ENCODE measurements at regions of chr12 and their contacts with region 1.

Region 1: GRCh38 chr12:50167041-50167828 is at the start of gene CERS5:
- DNase-seq: peak; percentile 97 to 98
- ATAC-seq: peak; percentile 96
- H3K4me3 ChIP-seq: peak within 1 kb of the TSS; percentile 74 to 99 (median 92)
- H3K27ac ChIP-seq: peak within 1 kb of the TSS; percentile 80 to 91 (median 87)
- H3K4me1 ChIP-seq: peaks cover 5 to 9% of the 10 kb centered on the region in 2 donors
- H3K27me3 ChIP-seq: no peaks in the 10 kb centered on the region
- CTCF ChIP-seq: peak in 4 of 5 experiments; percentile 13 to 49 (median 46)
- POLR2A ChIP-seq: peak; percentile 62 to 67
- total RNA-seq, gene CERS5: 5.4 to 9.2 (median 7.3) TPM

Region 2: GRCh38 chr12:49623142-49623904 is 543.9 kb before region 1 on chr12 and contains the start of gene PRPF40B:
- in situ Hi-C with region 1: no loop called
- intact Hi-C with region 1: no loop called
- DNase-seq: peak; percentile 80 to 90
- ATAC-seq: peak; percentile 87 to 88
- H3K4me3 ChIP-seq: peak within 1 kb of the TSS; percentile 52 to 84 (median 65)
- H3K27ac ChIP-seq: peak within 1 kb of the TSS; percentile 80 to 91 (median 84)
- H3K4me1 ChIP-seq: peaks cover 11 to 15% of the 10 kb centered on the region in 2 donors
- H3K27me3 ChIP-seq: no peaks in the 10 kb centered on the region
- CTCF ChIP-seq: peak; percentile 36 to 65 (median 54)
- POLR2A ChIP-seq: peak; percentile 91 to 94
- total RNA-seq, gene PRPF40B: 17.6 to 21.3 (median 20.2) TPM

Region 3: DNA sequence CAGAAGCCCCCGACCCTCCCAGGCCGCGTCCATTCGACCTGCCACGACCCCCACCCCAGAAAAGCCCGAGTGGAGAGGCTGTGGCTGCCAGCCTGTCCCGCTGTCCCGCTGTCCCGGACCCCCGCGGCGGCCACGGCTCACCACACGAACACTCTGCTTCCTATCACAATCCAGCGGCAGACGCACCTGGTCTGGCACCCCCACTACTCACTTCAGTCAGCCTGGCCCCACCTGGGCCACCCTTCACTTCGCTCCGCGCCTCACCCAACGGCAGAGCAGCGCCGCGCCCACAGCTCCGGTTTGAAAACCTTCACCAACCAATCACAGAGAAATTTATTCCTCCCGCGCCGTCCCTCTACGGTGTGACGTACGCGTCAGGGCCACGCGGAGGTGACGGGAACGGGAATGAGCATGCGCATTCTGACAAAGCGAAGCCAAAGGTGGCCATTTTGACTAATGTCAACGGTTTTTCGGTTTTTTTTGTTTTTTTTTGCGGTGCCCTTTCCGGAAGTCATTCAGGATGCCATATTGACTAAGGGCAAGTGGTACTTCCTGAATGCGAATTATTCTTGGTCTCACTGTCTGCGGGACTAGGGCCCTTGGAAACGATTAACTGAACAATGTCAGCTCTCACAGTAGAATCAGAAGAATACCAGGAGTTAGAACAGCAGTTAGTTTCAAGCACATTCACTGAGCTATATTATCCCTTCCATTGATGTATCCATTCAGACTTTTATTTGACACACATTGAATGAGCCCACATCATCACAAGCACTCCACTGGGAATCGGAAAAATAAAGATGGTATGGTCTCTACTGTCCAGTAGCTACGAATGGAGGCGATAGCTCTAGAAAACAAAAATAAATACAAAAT is 141.8 kb before region 1 on chr12 and contains the start of gene RACGAP1:
- in situ Hi-C with region 1: no loop called
- intact Hi-C with region 1: loop called (anchors 5 kb)
- DNase-seq: peak; percentile 94 to 95
- ATAC-seq: peak; percentile 99 to 100
- H3K4me3 ChIP-seq: peak within 1 kb of the TSS; percentile 61 to 77 (median 66)
- H3K27ac ChIP-seq: peak within 1 kb of the TSS; percentile 53 to 67 (median 59)
- H3K4me1 ChIP-seq: peaks cover 6 to 11% of the 10 kb centered on the region in 2 donors
- H3K27me3 ChIP-seq: no peaks in the 10 kb centered on the region
- CTCF ChIP-seq: no peak
- POLR2A ChIP-seq: peak in 1 of 2 donors; percentile 59
- total RNA-seq, gene RACGAP1: 5.6 to 13.3 (median 6.5) TPM

Region 4: GRCh38 chr12:50084775-50085614 is 82.2 kb before region 1 on chr12 and contains the start of gene SMARCD1:
- in situ Hi-C with region 1: no loop called
- intact Hi-C with region 1: loop called (anchors 2 kb)
- DNase-seq: peak; percentile 86 to 88
- ATAC-seq: peak; percentile 81 to 91
- H3K4me3 ChIP-seq: peak within 1 kb of the TSS; percentile 81 to 95 (median 88)
- H3K27ac ChIP-seq: peak within 1 kb of the TSS; percentile 92 to 99 (median 96)
- H3K4me1 ChIP-seq: peaks cover 13 to 14% of the 10 kb centered on the region in 2 donors
- H3K27me3 ChIP-seq: no peaks in the 10 kb centered on the region
- CTCF ChIP-seq: peak in 2 of 5 experiments; percentile 26 to 41
- POLR2A ChIP-seq: peak in 1 of 2 donors; percentile 37
- total RNA-seq, gene SMARCD1: 16.9 to 27.3 (median 20.1) TPM

Region 5: DNA sequence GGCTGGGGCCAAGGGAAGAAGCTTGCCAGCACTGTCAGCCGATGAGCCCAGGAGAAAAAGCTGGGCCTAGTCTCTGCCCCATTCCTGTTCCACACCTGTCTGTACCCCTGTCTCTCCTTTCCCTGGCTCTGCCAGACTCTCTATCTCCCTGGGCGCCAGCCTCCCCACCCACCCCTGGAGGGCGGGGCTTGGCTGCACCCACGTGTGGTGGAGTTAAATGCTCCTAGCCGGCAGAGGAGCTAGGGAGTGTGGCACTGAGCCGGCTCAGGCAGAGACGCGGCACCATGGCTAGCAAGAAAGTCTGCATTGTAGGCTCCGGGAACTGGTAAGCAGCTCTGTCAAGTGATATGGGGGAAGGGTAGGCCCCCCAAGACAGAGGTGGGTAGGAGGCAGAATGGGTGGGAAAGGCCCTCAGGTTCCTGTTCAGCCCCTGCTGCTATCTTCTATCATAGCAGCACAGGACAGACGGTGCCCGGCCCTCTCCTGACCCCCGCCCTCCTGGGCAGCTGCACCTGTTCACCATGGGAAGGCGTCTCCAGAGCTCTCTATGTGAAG is 63.4 kb before region 1 on chr12 and contains the start of gene GPD1:
- in situ Hi-C with region 1: loop called in 1 of 4 experiments (anchors 10 kb)
- intact Hi-C with region 1: no loop called
- DNase-seq: peak; percentile 65 to 93
- ATAC-seq: peak; percentile 75 to 78
- H3K4me3 ChIP-seq: peak within 1 kb of the TSS; percentile 43 to 55 (median 51)
- H3K27ac ChIP-seq: peak within 1 kb of the TSS; percentile 92 to 95 (median 95)
- H3K4me1 ChIP-seq: peaks cover 61 to 62% of the 10 kb centered on the region in 2 donors
- H3K27me3 ChIP-seq: no peaks in the 10 kb centered on the region
- CTCF ChIP-seq: peak in 1 of 5 experiments; percentile 27
- POLR2A ChIP-seq: peak; percentile 81 to 93
- total RNA-seq, gene GPD1: 68.2 to 763 (median 288) TPM

Region 6: GRCh38 chr12:50127546-50127945 is 39.7 kb before region 1 on chr12:
- in situ Hi-C with region 1: no loop called
- intact Hi-C with region 1: loop called (anchors 5 kb)
- DNase-seq: no peak
- ATAC-seq: no peak
- H3K4me3 ChIP-seq: no peak overlapping the region
- H3K27ac ChIP-seq: no peak overlapping the region
- H3K4me1 ChIP-seq: no peaks in the 10 kb centered on the region
- H3K27me3 ChIP-seq: no peaks in the 10 kb centered on the region
- CTCF ChIP-seq: no peak
- POLR2A ChIP-seq: no peak

Region 7: GRCh38 chr12:50211392-50212070 is 44.3 kb after region 1 on chr12:
- in situ Hi-C with region 1: no loop called
- intact Hi-C with region 1: no loop called
- DNase-seq: no peak
- ATAC-seq: no peak
- H3K4me3 ChIP-seq: no peak overlapping the region
- H3K27ac ChIP-seq: peak overlapping the region; percentile 30 to 75 (median 60)
- H3K4me1 ChIP-seq: peaks cover 0 to 8% of the 10 kb centered on the region in 2 donors
- H3K27me3 ChIP-seq: no peaks in the 10 kb centered on the region
- CTCF ChIP-seq: no peak
- POLR2A ChIP-seq: no peak

Region 8: DNA sequence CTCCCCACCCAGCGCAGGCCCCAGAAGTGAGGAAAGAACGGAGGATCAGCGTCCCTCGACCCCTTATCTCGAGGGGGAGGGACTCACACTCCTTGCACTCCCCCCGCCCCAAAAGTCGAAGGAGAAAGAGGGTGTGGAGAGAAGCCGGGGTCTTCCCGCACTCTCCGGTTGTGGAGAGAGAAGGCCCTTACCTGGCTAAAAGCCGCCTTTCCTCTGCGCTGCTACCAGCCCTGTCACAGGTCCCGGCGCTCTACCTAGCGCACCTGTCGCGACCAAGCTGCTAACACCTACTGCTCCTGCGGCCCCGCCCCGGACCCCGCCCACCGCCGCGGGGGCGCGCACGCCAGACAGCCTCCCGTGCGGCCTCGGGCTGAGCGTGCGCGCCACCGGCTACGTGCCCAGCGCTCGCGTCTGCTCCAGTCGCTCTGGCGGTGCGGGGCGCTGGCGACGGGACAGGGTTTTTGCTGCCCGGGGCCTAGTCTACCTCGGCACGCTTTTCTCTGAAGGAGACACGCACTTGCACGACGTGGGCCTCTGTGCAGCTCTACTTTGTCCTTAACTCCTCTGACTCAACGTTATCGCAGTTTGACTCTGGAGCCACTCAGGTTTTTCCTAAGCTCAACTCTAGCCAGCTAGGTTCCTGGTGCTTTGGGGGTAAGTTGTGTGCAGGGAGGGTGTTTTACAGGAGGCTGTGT is 116.1 kb after region 1 on chr12 and contains the start of gene LIMA1:
- in situ Hi-C with region 1: no loop called
- intact Hi-C with region 1: no loop called
- DNase-seq: peak; percentile 86 to 90
- ATAC-seq: peak; percentile 90 to 94
- H3K4me3 ChIP-seq: peak within 1 kb of the TSS; percentile 79 to 95 (median 87)
- H3K27ac ChIP-seq: peak within 1 kb of the TSS; percentile 80 to 94 (median 88)
- H3K4me1 ChIP-seq: peaks cover 29 to 33% of the 10 kb centered on the region in 2 donors
- H3K27me3 ChIP-seq: no peaks in the 10 kb centered on the region
- CTCF ChIP-seq: peak in 4 of 5 experiments; percentile 54 to 72 (median 66)
- POLR2A ChIP-seq: peak; percentile 46 to 50
- total RNA-seq, gene LIMA1: 7.4 to 24.5 (median 8.8) TPM